Activated CD4-positive, alpha-beta T cell treated with anti-CD3 and anti-CD28 coated beads for 36 hours (primary cell): ENCODE measurements at regions of chr10 and their contacts with region 1.

Region 1: GRCh38 chr10:74589226-74589673 is 237.2 kb upstream of the KAT6B start:
- DNase-seq: peak; percentile 93
- ATAC-seq: peak; percentile 54
- H3K4me3 Mint-ChIP-seq: no peak overlapping the region
- H3K27ac Mint-ChIP-seq: peak overlapping the region; percentile 85
- H3K4me1 Mint-ChIP-seq: peaks cover 69% of the 10 kb centered on the region
- H3K27me3 Mint-ChIP-seq: no peaks in the 10 kb centered on the region

Region 2: GRCh38 chr10:73879296-73880173 is 709.7 kb before region 1 on chr10:
- CTCF ChIA-PET with region 1: no interaction called
- POLR2A ChIA-PET with region 1: no interaction called
- intact Hi-C with region 1: loop called in 1 of 2 experiments (anchors 5 kb)
- DNase-seq: peak; percentile 98
- ATAC-seq: peak; percentile 86
- H3K4me3 Mint-ChIP-seq: no peak overlapping the region
- H3K27ac Mint-ChIP-seq: peak overlapping the region; percentile 71
- H3K4me1 Mint-ChIP-seq: peaks cover 45% of the 10 kb centered on the region
- H3K27me3 Mint-ChIP-seq: no peaks in the 10 kb centered on the region

Region 3: DNA sequence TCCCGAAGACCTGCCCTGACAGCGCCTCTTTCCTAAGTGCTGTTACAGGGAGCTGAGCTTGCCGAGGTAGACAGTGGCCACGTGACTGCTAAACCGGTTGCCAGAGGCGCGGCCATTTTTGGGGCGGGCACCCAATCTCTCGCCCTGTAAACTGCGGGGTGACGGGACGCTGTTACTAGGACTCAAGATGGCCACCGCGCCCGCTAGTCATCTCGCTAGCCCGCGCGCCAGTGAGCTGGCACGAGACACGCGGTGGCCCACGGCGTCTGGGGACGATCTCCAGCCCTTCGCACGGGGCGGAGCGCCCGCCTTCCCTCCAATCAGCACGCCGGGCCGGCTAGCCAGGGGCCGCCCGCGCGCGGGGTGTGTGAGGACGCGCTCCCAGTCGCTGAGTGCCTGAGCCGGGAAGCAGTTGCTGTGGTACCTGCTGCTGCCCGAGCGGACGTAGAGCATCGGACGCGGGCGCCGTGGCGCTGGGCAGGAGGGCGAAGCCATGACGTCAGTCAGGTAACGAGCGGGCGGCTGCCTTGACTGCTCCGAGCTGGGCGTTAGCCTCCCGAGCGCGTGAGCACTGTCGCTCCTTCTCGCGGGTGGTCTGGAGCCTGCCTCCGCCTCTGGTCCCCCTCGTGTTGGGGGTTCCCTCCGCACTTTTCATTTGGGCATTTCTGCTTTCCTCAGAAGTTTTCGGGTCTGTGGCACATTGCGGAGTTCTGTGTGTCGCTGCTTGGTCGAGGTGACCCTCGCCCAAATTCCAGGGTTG is 412.7 kb before region 1 on chr10:
- CTCF ChIA-PET with region 1: no interaction called
- POLR2A ChIA-PET with region 1: no interaction called
- intact Hi-C with region 1: loop called in 1 of 2 experiments (anchors 2 kb)
- DNase-seq: peak; percentile 98
- ATAC-seq: peak; percentile 94
- H3K4me3 Mint-ChIP-seq: peak overlapping the region; percentile 89
- H3K27ac Mint-ChIP-seq: peak overlapping the region; percentile 95
- H3K4me1 Mint-ChIP-seq: peaks cover 37% of the 10 kb centered on the region
- H3K27me3 Mint-ChIP-seq: no peaks in the 10 kb centered on the region

Region 4: GRCh38 chr10:74451127-74451829 is 138.0 kb before region 1 on chr10:
- CTCF ChIA-PET with region 1: no interaction called
- POLR2A ChIA-PET with region 1: no interaction called
- intact Hi-C with region 1: loop called in 1 of 2 experiments (anchors 1 kb)
- DNase-seq: no peak
- ATAC-seq: peak; percentile 47
- H3K4me3 Mint-ChIP-seq: no peak overlapping the region
- H3K27ac Mint-ChIP-seq: peak overlapping the region; percentile 77
- H3K4me1 Mint-ChIP-seq: peaks cover 8% of the 10 kb centered on the region
- H3K27me3 Mint-ChIP-seq: no peaks in the 10 kb centered on the region

Region 5: DNA sequence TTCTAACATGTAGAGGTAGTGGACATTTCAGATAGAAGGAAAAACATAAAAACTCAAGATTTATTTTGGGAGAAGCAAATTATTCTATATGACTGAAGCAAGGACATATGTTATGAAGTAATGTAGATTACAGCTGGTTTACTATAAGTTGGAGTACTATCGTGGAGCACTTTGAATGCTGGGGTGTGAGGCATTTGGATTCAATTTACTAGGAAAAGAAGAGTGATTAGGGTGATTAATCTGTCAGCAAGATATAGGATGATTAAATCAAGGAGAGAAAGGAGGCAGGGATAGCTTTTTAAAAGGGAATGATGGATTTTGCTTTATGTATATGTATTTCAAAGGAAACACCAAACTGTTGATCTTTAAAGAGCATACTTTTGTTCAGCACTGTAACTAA is 81.3 kb before region 1 on chr10:
- CTCF ChIA-PET with region 1: no interaction called
- POLR2A ChIA-PET with region 1: no interaction called
- intact Hi-C with region 1: no loop called
- DNase-seq: no peak
- ATAC-seq: no peak
- H3K4me3 Mint-ChIP-seq: no peak overlapping the region
- H3K27ac Mint-ChIP-seq: no peak overlapping the region
- H3K4me1 Mint-ChIP-seq: peaks cover 17% of the 10 kb centered on the region
- H3K27me3 Mint-ChIP-seq: no peaks in the 10 kb centered on the region

Region 6: GRCh38 chr10:74799721-74800221 is 210.5 kb after region 1 on chr10:
- CTCF ChIA-PET with region 1: no interaction called
- POLR2A ChIA-PET with region 1: no interaction called
- intact Hi-C with region 1: loop called in 1 of 2 experiments (anchors 1 kb)
- DNase-seq: peak; percentile 71
- ATAC-seq: peak; percentile 99
- H3K4me3 Mint-ChIP-seq: no peak overlapping the region
- H3K27ac Mint-ChIP-seq: peak overlapping the region; percentile 24
- H3K4me1 Mint-ChIP-seq: peaks cover 11% of the 10 kb centered on the region
- H3K27me3 Mint-ChIP-seq: no peaks in the 10 kb centered on the region

Region 7: GRCh38 chr10:75042292-75042974 is 453.2 kb after region 1 on chr10:
- CTCF ChIA-PET with region 1: no interaction called
- POLR2A ChIA-PET with region 1: no interaction called
- intact Hi-C with region 1: loop called in 1 of 2 experiments (anchors 1 kb)
- DNase-seq: peak; percentile 28
- ATAC-seq: peak; percentile 82
- H3K4me3 Mint-ChIP-seq: no peak overlapping the region
- H3K27ac Mint-ChIP-seq: peak overlapping the region; percentile 80
- H3K4me1 Mint-ChIP-seq: peaks cover 57% of the 10 kb centered on the region
- H3K27me3 Mint-ChIP-seq: peaks cover 5% of the 10 kb centered on the region

Region 8: GRCh38 chr10:75210282-75211006 is 621.2 kb after region 1 on chr10 and contains the start of gene VDAC2:
- CTCF ChIA-PET with region 1: no interaction called
- POLR2A ChIA-PET with region 1: no interaction called
- intact Hi-C with region 1: loop called in 1 of 2 experiments (anchors 1 kb)
- DNase-seq: peak; percentile 96
- ATAC-seq: peak; percentile 83
- H3K4me3 Mint-ChIP-seq: peak within 1 kb of the TSS; percentile 89
- H3K27ac Mint-ChIP-seq: peak within 1 kb of the TSS; percentile 100
- H3K4me1 Mint-ChIP-seq: peaks cover 40% of the 10 kb centered on the region
- H3K27me3 Mint-ChIP-seq: no peaks in the 10 kb centered on the region
- total RNA-seq, gene VDAC2: 122 to 233 TPM